HEK293T (cell line): ENCODE measurements at regions of chr5 and their contacts with region 1.

Region 1: GRCh38 chr5:114065912-114066311 is 296.0 kb upstream of the KCNN2 start:
- DNase-seq: no peak

Region 2: DNA sequence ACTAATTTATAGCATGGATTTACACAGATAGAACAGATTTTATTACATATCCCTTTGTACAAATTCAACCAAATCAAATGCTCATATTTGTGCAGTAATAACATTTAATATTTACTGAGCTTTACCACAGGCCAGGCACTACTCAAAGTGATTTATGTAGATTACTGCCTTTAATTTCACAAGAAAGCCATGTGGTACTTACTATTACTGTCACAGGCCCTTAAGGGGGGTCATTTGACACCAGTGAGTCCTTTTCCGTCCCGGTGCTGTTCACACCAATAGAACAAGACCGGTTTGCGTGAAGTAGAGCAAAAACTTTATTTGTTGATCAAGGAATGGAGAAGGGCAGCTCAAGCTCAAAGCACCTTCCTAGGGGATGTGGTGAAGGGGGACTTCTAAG is 12.5 kb before region 1 on chr5:
- CTCF ChIA-PET with region 1: interaction called, 10 read pairs
- POLR2A ChIA-PET with region 1: no interaction called
- DNase-seq: no peak